ENCODE measurements at regions of chr22 and their contacts with region 1.

Region 1: DNA sequence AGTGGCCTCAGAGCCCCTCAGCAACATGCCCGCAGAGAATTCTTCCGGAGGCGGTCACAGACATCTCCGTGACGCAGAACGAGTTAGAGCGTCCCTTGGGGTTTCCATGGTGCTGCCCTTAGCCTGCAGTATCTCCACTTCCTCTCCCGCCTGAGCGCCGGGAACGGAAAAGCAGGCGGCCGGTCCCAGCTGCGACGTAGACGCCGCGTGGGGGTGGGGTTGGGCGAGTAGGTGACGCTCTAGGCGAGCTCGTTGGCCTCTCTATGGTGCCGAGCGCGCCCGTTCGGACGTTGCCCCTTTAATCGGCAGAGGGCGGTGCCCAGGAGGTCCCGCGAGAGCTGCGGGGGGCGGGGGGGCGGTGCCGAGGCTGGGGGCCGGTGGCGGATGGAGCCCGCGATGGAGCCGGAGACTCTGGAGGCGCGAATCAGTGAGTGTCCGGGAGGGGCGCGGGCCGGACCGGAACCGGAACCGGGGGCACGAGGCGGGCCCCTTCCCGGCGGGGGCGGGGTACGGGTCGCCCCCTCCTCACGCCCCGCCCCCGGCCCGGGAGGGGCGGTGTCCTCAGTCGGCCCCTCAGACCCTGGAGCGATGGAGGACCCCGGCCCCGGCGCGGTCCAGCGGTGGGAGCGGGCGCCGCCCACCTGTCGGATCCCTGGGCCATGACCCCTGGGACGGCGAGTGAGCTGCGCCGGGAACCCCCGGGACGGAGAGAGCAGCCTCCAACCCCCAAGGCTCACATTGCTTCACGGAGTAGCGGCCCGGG is at the start of gene GGA1:
- DNase-seq: peak; percentile 99
- ATAC-seq: peak; percentile 75
- H3K4me3 ChIP-seq: peak within 1 kb of the TSS; percentile 65 to 89 (median 77)
- H3K4me3 Mint-ChIP-seq: peak within 1 kb of the TSS; percentile 96
- H3K27ac ChIP-seq: peak within 1 kb of the TSS; percentile 94 to 99
- H3K27ac Mint-ChIP-seq: peak within 1 kb of the TSS; percentile 98
- H3K4me1 ChIP-seq: peaks cover 26 to 36% of the 10 kb centered on the region in 2 donors
- H3K4me1 Mint-ChIP-seq: peaks cover 33% of the 10 kb centered on the region
- H3K27me3 ChIP-seq: peaks cover 0 to 2% (median 0%) of the 10 kb centered on the region in 4 experiments
- H3K27me3 Mint-ChIP-seq: peaks cover 10% of the 10 kb centered on the region
- CTCF ChIP-seq: no peak
- total RNA-seq, gene GGA1: 146 and 154 TPM in 2 replicates

Region 2: DNA sequence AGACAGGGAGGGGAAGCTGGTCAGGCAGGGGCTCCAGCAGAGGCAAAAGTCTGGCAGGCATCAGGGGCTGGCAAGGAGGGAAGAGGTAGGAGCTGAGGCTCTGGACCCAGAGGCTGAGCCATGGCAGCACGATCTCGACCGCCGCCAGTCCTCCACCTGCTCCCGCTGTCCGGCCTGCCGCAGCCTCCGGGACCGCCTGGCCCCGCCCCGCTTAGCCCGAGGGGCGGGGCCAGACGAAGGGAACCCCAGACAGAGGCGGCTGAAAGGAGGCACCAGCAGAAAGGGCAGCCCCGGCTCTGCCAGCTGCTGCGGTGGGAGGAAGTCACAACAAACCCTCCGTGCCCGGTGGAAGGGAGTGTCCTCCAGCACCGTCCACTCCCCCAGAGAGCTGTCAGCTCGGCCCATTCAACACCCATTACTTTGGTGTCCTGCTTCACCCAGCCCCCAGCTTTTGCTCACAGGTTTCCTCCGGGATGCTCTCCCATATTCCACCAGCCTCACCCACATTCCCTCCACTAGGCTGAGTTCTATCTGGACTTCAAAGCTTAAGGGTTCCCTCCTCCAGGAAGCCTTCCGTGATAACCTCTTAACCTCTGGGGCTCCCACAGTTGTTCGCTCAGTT is 122.3 kb before region 1 on chr22 and contains the start of gene MFNG:
- CTCF ChIA-PET with region 1: interaction called, 4 read pairs
- POLR2A ChIA-PET with region 1: interaction called, 10 read pairs
- intact Hi-C with region 1: no loop called
- DNase-seq: peak; percentile 86
- ATAC-seq: peak; percentile 78
- H3K4me3 ChIP-seq: peak within 1 kb of the TSS; percentile 63 to 91 (median 80)
- H3K4me3 Mint-ChIP-seq: peak within 1 kb of the TSS; percentile 98
- H3K27ac ChIP-seq: peak within 1 kb of the TSS; percentile 70 to 93
- H3K27ac Mint-ChIP-seq: peak within 1 kb of the TSS; percentile 98
- H3K4me1 ChIP-seq: peaks cover 24 to 47% of the 10 kb centered on the region in 2 donors
- H3K4me1 Mint-ChIP-seq: peaks cover 55% of the 10 kb centered on the region
- H3K27me3 ChIP-seq: no peaks in the 10 kb centered on the region
- H3K27me3 Mint-ChIP-seq: no peaks in the 10 kb centered on the region
- CTCF ChIP-seq: no peak
- total RNA-seq, gene MFNG: 95.9 and 109 TPM in 2 replicates

Region 3: DNA sequence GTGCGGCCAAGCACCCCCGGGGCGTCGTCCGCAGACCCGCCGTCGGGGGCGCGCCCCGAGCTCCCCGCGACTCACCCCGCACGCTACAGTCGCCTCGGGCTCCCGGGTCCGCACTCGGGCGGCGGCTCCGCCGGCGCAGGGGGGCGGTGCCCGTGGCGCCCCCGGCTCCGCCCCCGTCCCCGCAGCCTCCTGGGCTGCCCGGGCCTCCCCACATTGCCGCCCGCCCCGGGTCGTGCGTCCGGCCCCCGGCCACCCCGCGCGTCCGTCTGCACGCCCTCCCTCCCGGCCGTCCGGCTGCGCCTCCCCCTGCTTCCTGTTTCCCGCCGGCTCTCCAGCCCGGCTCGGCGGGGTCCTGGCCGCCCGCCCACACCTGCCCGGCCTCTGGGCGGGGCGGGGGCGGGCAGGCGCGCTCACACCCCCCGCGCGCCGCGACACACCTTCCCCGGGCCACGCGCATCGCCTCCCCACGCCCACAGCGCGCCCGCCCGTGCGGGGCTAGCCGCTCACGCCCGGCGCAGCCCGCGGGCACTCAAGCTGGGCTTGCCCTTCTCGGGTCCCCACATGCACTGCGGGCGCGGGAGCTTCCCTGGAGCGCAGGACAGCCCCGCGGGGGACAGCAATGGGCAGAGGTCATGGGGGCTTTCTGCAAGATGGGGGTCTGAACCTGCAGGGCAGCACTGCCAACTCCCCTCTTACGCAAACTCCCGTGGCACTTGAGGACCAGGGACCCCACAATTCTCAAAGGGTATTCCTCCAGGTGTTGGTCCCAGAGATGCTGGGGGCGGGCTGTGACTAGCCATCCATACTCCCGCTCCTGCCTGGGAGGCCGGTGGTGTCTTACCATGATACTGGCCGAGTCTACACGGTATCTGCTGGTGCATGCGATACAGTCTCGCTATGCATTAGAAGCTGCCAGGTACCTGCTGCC is 89.1 kb before region 1 on chr22 and contains the start of gene CARD10:
- CTCF ChIA-PET with region 1: no interaction called
- POLR2A ChIA-PET with region 1: no interaction called
- intact Hi-C with region 1: no loop called
- DNase-seq: peak; percentile 43
- ATAC-seq: peak; percentile 36
- H3K4me3 ChIP-seq: peak within 1 kb of the TSS in 3 of 5 experiments; percentile 41 to 49 (median 44)
- H3K4me3 Mint-ChIP-seq: peak within 1 kb of the TSS; percentile 74
- H3K27ac ChIP-seq: no peak within 1 kb of the TSS
- H3K27ac Mint-ChIP-seq: no peak within 1 kb of the TSS
- H3K4me1 ChIP-seq: peaks cover 5 to 10% of the 10 kb centered on the region in 2 donors
- H3K4me1 Mint-ChIP-seq: peaks cover 6% of the 10 kb centered on the region
- H3K27me3 ChIP-seq: peaks cover 0 to 49% (median 12%) of the 10 kb centered on the region in 4 experiments
- H3K27me3 Mint-ChIP-seq: peaks cover 55% of the 10 kb centered on the region
- CTCF ChIP-seq: no peak
- total RNA-seq, gene CARD10: not detected in 2 replicates

Region 4: GRCh38 chr22:37588546-37589215 is 20.0 kb before region 1 on chr22:
- CTCF ChIA-PET with region 1: interaction called, 55 read pairs
- POLR2A ChIA-PET with region 1: interaction called, 17 read pairs
- intact Hi-C with region 1: loop called (anchors 1 kb)
- DNase-seq: no peak
- ATAC-seq: no peak
- H3K4me3 ChIP-seq: no peak overlapping the region
- H3K4me3 Mint-ChIP-seq: no peak overlapping the region
- H3K27ac ChIP-seq: no peak overlapping the region
- H3K27ac Mint-ChIP-seq: no peak overlapping the region
- H3K4me1 ChIP-seq: peaks cover 4 to 9% of the 10 kb centered on the region in 2 donors
- H3K4me1 Mint-ChIP-seq: peaks cover 11% of the 10 kb centered on the region
- H3K27me3 ChIP-seq: peaks cover 0 to 8% (median 0%) of the 10 kb centered on the region in 4 experiments
- H3K27me3 Mint-ChIP-seq: peaks cover 29% of the 10 kb centered on the region
- CTCF ChIP-seq: no peak

Region 5: DNA sequence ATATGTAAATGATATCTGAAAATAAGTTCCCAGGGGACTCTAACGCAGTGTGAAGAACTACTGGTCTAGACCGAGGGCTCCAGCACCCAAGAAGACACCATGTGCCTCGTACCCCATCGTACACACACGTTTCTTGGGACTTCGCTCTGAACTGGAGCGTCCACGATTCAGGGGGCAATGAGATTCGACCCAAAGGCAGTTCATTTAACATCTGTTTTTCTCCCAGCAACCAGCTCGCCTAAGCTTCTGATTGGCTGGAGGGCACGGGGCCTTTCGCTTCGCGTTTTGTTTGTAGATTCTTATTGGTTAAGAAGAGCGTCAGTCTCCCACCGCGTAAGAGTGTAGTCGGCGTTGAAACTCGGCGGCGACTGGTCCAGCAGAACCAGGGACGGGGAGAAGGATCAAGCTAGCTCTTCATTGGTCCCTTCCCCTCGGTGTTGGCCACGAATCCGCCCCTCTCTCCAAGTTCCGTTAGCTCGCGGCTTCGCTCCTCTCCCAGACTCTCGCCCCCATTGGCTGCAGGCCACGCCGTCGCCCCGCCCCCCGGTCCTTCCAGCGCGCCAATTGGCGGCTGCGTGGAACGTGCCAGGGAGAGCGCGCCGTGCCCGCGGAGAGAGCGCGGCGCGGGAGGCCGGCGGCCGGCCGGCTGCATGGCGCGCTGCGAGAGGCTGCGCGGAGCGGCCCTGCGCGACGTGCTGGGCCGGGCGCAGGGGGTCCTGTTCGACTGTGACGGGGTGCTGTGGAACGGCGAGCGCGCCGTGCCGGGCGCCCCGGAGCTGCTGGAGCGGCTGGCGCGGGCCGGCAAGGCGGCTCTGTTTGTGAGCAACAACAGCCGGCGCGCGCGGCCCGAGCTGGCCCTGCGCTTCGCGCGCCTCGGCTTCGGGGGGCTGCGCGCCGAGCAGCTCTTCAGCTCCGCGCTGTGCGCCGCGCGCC is 49.7 kb after region 1 on chr22 and contains the start of gene PDXP:
- CTCF ChIA-PET with region 1: interaction called, 51 read pairs
- POLR2A ChIA-PET with region 1: interaction called, 33 read pairs
- intact Hi-C with region 1: loop called (anchors 1 kb)
- DNase-seq: peak; percentile 99
- ATAC-seq: peak; percentile 88
- H3K4me3 ChIP-seq: peak within 1 kb of the TSS; percentile 49 to 74 (median 64)
- H3K4me3 Mint-ChIP-seq: peak within 1 kb of the TSS; percentile 98
- H3K27ac ChIP-seq: peak within 1 kb of the TSS; percentile 72 to 84
- H3K27ac Mint-ChIP-seq: peak within 1 kb of the TSS; percentile 99
- H3K4me1 ChIP-seq: peaks cover 38 to 46% of the 10 kb centered on the region in 2 donors
- H3K4me1 Mint-ChIP-seq: peaks cover 47% of the 10 kb centered on the region
- H3K27me3 ChIP-seq: no peaks in the 10 kb centered on the region
- H3K27me3 Mint-ChIP-seq: no peaks in the 10 kb centered on the region
- CTCF ChIP-seq: no peak
- total RNA-seq, gene PDXP: 16.6 and 16.9 TPM in 2 replicates

Region 6: GRCh38 chr22:37745548-37746365 is 137.1 kb after region 1 on chr22:
- CTCF ChIA-PET with region 1: interaction called, 4 read pairs
- POLR2A ChIA-PET with region 1: interaction called, 3 read pairs
- intact Hi-C with region 1: loop called (anchors 2 kb)
- DNase-seq: peak; percentile 90
- ATAC-seq: peak; percentile 96
- H3K4me3 ChIP-seq: peak overlapping the region; percentile 66 to 85 (median 73)
- H3K4me3 Mint-ChIP-seq: peak overlapping the region; percentile 93
- H3K27ac ChIP-seq: peak overlapping the region in 1 of 2 donors; percentile 74
- H3K27ac Mint-ChIP-seq: peak overlapping the region; percentile 87
- H3K4me1 ChIP-seq: peaks cover 14 to 20% of the 10 kb centered on the region in 2 donors
- H3K4me1 Mint-ChIP-seq: peaks cover 24% of the 10 kb centered on the region
- H3K27me3 ChIP-seq: no peaks in the 10 kb centered on the region
- H3K27me3 Mint-ChIP-seq: no peaks in the 10 kb centered on the region
- CTCF ChIP-seq: no peak

Region 7: DNA sequence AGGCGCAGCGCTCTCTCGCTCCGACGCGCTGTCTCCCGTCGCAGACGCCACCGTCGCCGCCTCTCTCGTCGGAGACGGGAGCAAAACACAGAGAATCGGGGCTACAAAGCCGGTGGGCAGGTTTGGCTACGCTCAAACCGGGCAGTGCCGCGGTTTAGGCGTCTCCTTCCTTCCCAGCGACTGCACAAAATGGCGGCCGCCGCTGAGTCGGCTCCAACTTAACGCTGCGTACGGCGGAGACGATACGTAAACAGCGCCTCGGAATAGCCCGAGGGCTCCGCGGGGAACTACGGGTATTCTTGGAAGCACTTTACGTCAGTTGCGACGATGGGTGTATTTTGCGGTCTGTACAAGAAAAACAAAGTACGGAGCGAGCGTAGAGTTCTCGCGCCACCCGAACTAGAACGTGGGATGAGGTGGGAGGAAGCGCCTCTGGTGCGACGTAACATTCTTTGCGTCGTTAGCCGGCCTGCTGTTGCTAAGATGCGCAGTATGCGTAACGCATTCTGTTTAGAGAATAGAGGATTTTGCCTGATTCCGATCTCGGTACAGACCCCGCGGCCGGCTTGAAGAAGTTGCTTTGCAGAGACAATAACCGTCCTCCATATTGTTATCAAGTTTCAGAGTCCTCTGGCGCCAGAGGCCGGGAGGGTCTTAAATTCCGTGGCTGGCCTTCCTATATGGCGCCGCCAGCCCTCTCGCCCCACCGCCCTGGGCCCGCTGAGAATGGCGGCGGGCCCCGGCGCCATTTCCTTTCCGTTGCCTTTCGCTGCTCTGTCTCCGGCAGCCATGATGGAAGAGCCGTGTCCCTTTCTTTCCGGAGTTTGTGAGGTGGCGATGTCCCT is 897.7 kb after region 1 on chr22 and contains the start of gene DDX17:
- CTCF ChIA-PET with region 1: no interaction called
- POLR2A ChIA-PET with region 1: no interaction called
- intact Hi-C with region 1: loop called (anchors 10 kb)
- DNase-seq: peak; percentile 99
- ATAC-seq: peak; percentile 87
- H3K4me3 ChIP-seq: peak within 1 kb of the TSS; percentile 78 to 99 (median 93)
- H3K4me3 Mint-ChIP-seq: peak within 1 kb of the TSS; percentile 99
- H3K27ac ChIP-seq: peak within 1 kb of the TSS; percentile 98
- H3K27ac Mint-ChIP-seq: peak within 1 kb of the TSS; percentile 100
- H3K4me1 ChIP-seq: peaks cover 39 to 40% of the 10 kb centered on the region in 2 donors
- H3K4me1 Mint-ChIP-seq: peaks cover 51% of the 10 kb centered on the region
- H3K27me3 ChIP-seq: no peaks in the 10 kb centered on the region
- H3K27me3 Mint-ChIP-seq: no peaks in the 10 kb centered on the region
- CTCF ChIP-seq: no peak
- total RNA-seq, gene DDX17: 936 and 967 TPM in 2 replicates